CD8-positive, alpha-beta T cell (primary cell): ENCODE measurements at regions of chr1 and their contacts with region 1.

Region 1: GRCh38 chr1:58768971-58769808 is 14.7 kb downstream of the JUN start:
- DNase-seq: peak in 6 of 9 experiments; percentile 28 to 58 (median 54)
- ATAC-seq: no peak
- H3K4me3 ChIP-seq: no peak overlapping the region
- H3K4me3 Mint-ChIP-seq: no peak overlapping the region
- H3K27ac ChIP-seq: no peak overlapping the region
- H3K27ac Mint-ChIP-seq: no peak overlapping the region
- H3K4me1 ChIP-seq: peaks cover 6% of the 10 kb centered on the region
- H3K4me1 Mint-ChIP-seq: peaks cover 11% of the 10 kb centered on the region
- H3K27me3 ChIP-seq: no peaks in the 10 kb centered on the region
- H3K27me3 Mint-ChIP-seq: peaks cover 2% of the 10 kb centered on the region
- CTCF ChIP-seq: peak; percentile 67

Region 2: GRCh38 chr1:58699011-58699762 is 70.0 kb before region 1 on chr1:
- CTCF ChIA-PET with region 1: no interaction called
- POLR2A ChIA-PET with region 1: no interaction called
- intact Hi-C with region 1: loop called in 1 of 2 experiments (anchors 1 kb)
- DNase-seq: peak in 1 of 9 experiments; percentile 51
- ATAC-seq: no peak
- H3K4me3 ChIP-seq: peak overlapping the region; percentile 86 to 100
- H3K4me3 Mint-ChIP-seq: peak overlapping the region; percentile 99
- H3K27ac ChIP-seq: peak overlapping the region; percentile 84 to 93
- H3K27ac Mint-ChIP-seq: peak overlapping the region; percentile 98
- H3K4me1 ChIP-seq: peaks cover 28% of the 10 kb centered on the region
- H3K4me1 Mint-ChIP-seq: peaks cover 25% of the 10 kb centered on the region
- H3K27me3 ChIP-seq: no peaks in the 10 kb centered on the region
- H3K27me3 Mint-ChIP-seq: no peaks in the 10 kb centered on the region
- CTCF ChIP-seq: no peak

Region 3: GRCh38 chr1:58739856-58740466 is 29.2 kb before region 1 on chr1:
- CTCF ChIA-PET with region 1: interaction called, 9 read pairs
- POLR2A ChIA-PET with region 1: no interaction called
- intact Hi-C with region 1: loop called in 1 of 2 experiments (anchors 1 kb)
- DNase-seq: peak in 3 of 9 experiments; percentile 35 to 76 (median 67)
- ATAC-seq: peak; percentile 49
- H3K4me3 ChIP-seq: no peak overlapping the region
- H3K4me3 Mint-ChIP-seq: no peak overlapping the region
- H3K27ac ChIP-seq: no peak overlapping the region
- H3K27ac Mint-ChIP-seq: no peak overlapping the region
- H3K4me1 ChIP-seq: no peaks in the 10 kb centered on the region
- H3K4me1 Mint-ChIP-seq: peaks cover 5% of the 10 kb centered on the region
- H3K27me3 ChIP-seq: no peaks in the 10 kb centered on the region
- H3K27me3 Mint-ChIP-seq: peaks cover 2% of the 10 kb centered on the region
- CTCF ChIP-seq: peak; percentile 98

Region 4: GRCh38 chr1:59315529-59316463 is 546.6 kb after region 1 on chr1:
- CTCF ChIA-PET with region 1: no interaction called
- POLR2A ChIA-PET with region 1: no interaction called
- intact Hi-C with region 1: no loop called
- DNase-seq: no peak
- ATAC-seq: no peak
- H3K4me3 ChIP-seq: peak overlapping the region in 1 of 2 experiments; percentile 31
- H3K4me3 Mint-ChIP-seq: no peak overlapping the region
- H3K27ac ChIP-seq: peak overlapping the region in 1 of 2 experiments; percentile 28
- H3K27ac Mint-ChIP-seq: no peak overlapping the region
- H3K4me1 ChIP-seq: no peaks in the 10 kb centered on the region
- H3K4me1 Mint-ChIP-seq: peaks cover 20% of the 10 kb centered on the region
- H3K27me3 ChIP-seq: no peaks in the 10 kb centered on the region
- H3K27me3 Mint-ChIP-seq: no peaks in the 10 kb centered on the region
- CTCF ChIP-seq: no peak